Psoas muscle (tissue), 8 donors: ENCODE measurements at regions of chr22 and their contacts with region 1.

Region 1: DNA sequence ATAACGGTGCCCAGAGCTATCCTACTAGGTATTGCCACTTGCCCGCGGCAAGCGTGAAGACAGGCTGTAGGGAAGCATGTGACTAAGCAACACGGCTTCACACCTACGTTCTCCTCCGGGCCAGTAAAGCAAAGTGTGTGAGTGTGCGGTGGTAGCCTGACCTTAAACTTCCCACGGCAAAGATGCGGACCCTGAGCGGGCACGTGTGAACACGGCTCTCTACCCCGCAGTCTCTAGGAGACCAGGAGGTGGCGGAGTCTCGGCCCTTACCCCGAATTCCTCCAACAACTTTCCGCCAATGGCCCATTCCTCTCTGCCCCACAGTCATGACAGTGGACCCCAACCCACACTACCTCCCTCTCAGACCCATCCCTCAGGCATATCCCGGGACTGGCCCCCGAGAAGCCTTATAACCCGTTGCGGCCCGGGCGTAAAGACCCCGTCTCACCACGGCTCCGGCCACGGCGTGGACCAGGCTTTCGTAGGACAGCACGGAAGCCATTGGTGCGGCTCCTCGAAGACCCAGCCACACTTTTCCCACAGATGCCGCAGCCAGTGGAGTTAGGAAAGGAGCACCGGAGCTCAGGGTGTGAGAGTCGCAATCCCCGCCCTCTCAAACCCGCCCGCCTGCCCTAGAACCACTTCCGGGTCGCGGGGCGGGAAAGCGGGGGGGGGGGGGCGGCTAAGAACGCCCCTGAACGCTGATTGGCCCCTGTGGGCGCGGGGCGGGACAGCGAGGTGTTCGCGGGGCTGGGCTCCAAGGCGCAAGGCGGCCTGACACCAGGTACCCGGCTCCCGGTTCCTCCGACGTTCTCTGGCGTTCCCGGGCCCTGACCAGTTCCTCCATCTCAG is at the start of gene SLC25A17:
- DNase-seq: peak; percentile 89 to 94
- ATAC-seq: peak; percentile 93 to 97 (median 96)
- H3K4me3 ChIP-seq: peak within 1 kb of the TSS; percentile 98
- H3K27ac ChIP-seq: peak within 1 kb of the TSS; percentile 90
- H3K4me1 ChIP-seq: peaks cover 33% of the 10 kb centered on the region
- H3K27me3 ChIP-seq: no peaks in the 10 kb centered on the region
- CTCF ChIP-seq: peak; percentile 31
- total RNA-seq, gene SLC25A17: 2.7 to 6.2 (median 3.7) TPM

Region 2: GRCh38 chr22:40856513-40857308 is 37.7 kb after region 1 on chr22 and contains the starts of genes ST13 and XPNPEP3:
- intact Hi-C with region 1: loop called in 1 of 2 experiments (anchors 2 kb)
- DNase-seq: peak; percentile 98 to 99
- ATAC-seq: peak; percentile 94 to 98 (median 97)
- H3K4me3 ChIP-seq: peak within 1 kb of the TSS; percentile 96
- H3K27ac ChIP-seq: peak within 1 kb of the TSS; percentile 98
- H3K4me1 ChIP-seq: peaks cover 55% of the 10 kb centered on the region
- H3K27me3 ChIP-seq: no peaks in the 10 kb centered on the region
- CTCF ChIP-seq: no peak
- total RNA-seq, gene ST13: 262 to 316 (median 296) TPM
- total RNA-seq, gene XPNPEP3: 9.8 to 16.3 (median 11.2) TPM